Common myeloid progenitor, CD34-positive (primary cell): ENCODE measurements at regions of chr12 and their contacts with region 1.

Region 1: DNA sequence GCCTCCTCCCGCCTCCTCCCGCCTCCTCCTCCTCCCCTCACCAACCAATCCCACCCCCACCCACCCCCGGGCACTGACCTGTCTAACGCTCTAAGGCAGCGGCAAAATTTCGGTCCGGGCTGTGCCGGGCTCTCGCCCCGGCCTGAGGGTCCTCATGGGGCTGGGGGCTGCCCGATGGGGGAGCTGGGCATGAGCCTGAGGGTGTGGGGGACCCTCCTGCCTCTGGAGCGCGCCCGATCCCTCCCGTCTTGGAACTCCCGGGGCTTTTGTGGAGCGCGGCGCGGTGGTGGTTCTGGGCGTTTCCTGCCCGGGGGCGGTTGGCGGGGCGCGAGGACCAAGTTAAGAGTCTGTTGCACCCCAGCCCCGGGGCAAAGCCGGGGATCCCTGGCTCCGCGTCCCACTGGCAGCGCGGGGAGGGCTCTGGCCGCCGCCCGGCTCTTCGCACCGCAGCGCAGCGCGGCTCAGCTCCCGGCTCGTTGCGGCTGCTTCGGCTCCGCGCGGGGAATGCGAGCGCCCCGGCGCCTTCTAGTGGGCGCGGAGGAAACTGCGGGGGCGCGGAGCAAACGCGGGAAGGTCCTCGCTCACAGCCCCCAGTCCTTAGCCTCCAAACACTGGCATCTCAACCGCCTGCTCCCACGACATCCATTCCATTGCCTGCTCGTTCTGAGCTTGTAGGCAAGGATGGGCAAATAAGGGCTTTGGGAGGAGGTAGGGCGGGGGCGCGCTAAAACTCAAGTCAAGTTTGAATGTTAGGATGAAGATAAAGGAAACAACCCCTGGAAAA is at the start of gene B4GALNT1:
- DNase-seq: peak; percentile 59 to 72 (median 70)
- H3K4me3 ChIP-seq: peak within 1 kb of the TSS in 6 of 7 experiments; percentile 31 to 73 (median 53)
- H3K27ac ChIP-seq: no peak within 1 kb of the TSS
- H3K4me1 ChIP-seq: peaks cover 0 to 25% (median 20%) of the 10 kb centered on the region in 4 experiments
- H3K27me3 ChIP-seq: peaks cover 0 to 60% (median 36%) of the 10 kb centered on the region in 5 experiments

Region 2: DNA sequence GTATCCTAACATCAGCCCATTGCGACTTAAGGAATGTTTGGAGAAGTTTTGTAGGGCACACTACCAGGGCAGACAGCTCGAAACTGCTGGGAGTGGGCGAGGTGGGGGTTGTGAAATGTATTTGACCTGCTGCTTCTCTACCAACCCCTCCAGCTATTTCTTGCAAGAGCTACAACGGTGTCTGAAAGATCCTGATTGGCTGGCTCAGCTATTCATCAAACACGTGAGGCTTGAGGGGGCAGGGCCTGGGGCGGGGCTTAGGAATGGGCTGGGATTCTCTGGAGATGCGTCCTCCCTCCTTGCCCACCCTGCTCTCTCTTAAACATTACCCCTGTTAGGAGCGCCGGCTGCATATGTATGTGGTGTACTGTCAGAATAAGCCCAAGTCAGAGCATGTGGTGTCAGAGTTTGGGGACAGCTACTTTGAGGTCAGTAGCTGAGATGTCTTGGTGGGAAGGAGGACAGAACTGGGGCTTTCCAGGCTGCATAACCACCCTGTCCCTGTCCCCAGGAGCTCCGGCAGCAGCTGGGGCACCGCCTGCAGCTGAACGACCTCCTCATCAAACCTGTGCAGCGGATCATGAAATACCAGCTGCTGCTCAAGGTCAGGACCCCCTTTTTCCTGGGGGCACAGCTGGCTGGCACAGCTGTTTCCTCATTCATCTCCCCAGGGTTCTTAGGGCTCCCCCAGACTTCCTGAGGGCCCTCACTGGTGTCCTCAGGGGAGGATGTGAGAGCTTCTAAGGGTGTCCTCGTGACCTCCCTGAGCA is 18.5 kb before region 1 on chr12:
- CTCF ChIA-PET with region 1: interaction called, 34 read pairs
- POLR2A ChIA-PET with region 1: no interaction called
- DNase-seq: peak; percentile 29 to 58 (median 58)
- H3K4me3 ChIP-seq: no peak overlapping the region
- H3K27ac ChIP-seq: no peak overlapping the region
- H3K4me1 ChIP-seq: peaks cover 0 to 22% (median 11%) of the 10 kb centered on the region in 4 experiments
- H3K27me3 ChIP-seq: peaks cover 0 to 74% (median 51%) of the 10 kb centered on the region in 5 experiments

Region 3: GRCh38 chr12:57693659-57694458 is 61.0 kb after region 1 on chr12 and contains the start of gene OS9:
- CTCF ChIA-PET with region 1: interaction called, 11 read pairs
- POLR2A ChIA-PET with region 1: interaction called, 3 read pairs
- DNase-seq: peak; percentile 100
- H3K4me3 ChIP-seq: peak within 1 kb of the TSS; percentile 92 to 100 (median 98)
- H3K27ac ChIP-seq: peak within 1 kb of the TSS; percentile 65 to 91
- H3K4me1 ChIP-seq: peaks cover 7 to 14% (median 12%) of the 10 kb centered on the region in 4 experiments
- H3K27me3 ChIP-seq: peaks cover 0 to 2% (median 0%) of the 10 kb centered on the region in 5 experiments

Region 4: DNA sequence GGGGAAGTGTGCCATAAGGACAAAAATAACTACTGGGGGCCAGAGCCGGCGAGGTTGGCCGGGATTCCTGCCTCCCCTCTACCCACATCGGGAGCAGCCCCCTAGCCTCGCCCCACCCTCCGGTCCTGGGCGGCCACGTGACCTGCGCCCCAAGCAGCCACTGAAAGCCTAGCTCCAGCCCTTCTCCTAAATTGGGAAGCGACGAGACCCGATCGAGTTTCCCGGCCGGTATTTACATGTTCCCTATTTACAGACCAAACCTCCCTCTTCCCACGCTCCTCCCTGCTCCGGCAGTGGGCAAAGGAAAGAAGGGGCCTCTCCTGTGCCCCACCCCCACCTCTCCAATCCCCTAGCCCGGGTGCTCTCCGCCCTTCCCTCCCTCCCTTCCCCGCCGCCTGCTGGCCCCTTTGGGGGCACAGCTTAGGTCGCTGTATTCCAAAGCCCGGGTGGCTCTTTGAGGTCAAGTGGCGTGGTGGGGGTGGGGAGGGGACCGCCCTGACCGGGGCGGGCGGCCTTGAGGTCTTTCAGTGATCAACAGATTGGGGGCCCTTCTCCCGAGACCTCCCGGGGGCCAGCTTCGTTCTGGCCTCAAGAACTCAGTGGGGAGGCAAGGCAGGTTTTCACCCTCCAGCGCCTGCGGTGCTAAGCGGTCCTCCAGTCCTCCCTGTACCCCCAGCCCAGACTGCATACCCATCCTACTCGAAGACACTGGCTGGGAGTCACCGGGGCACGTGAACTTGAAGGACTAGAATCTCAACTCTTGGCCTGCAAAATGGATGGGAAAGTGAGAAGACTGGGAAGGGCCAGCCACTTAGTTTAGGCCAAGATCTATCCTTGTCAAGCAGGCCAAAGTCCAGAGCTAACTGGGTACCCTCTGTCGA is 220.0 kb after region 1 on chr12:
- CTCF ChIA-PET with region 1: no interaction called
- POLR2A ChIA-PET with region 1: no interaction called
- DNase-seq: peak in 1 of 3 donors; percentile 45
- H3K4me3 ChIP-seq: peak overlapping the region; percentile 20 to 76 (median 48)
- H3K27ac ChIP-seq: no peak overlapping the region
- H3K4me1 ChIP-seq: peaks cover 7 to 43% (median 36%) of the 10 kb centered on the region in 4 experiments
- H3K27me3 ChIP-seq: no peaks in the 10 kb centered on the region